ENCODE measurements at regions of chr6 and their contacts with region 1.

Region 1: DNA sequence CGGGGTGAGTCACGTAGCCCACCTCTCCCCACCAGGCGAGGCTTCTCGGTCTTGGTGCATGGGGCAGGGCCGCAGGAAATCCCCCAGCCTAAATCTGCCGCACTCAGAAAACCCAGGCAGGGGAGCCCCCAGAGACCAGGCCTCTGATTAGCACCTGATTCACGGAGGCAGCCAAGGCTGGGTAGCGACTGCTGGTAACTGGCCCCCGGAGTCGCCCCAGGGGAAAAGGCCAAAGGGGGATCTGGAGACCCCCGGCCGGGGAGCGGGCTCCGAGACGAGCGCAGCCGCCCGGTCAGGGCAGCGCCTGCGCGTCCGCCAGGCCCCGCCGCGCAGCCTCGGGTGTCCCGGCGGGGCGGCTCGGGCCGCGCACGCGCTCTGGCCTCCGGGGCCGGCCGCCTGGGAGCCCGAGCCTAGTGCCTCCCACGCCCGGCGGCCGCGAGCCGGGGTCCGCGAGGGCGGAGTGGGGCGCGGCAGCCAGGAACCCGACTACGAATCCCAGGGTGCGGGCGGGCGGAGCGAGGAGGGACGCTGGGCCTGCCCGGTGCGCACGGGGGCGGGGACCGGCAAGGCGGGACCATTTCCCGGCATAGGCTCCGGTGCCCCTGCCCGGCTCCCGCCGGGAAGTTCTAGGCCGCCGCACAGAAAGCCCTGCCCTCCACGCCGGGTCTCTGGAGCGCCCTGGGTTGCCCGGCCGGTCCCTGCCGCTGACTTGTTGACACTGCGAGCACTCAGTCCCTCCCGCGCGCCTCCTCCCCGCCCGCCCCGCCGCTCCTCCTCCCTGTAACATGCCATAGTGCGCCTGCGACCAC is at the start of gene DUSP22:
- DNase-seq: peak; percentile 93
- ATAC-seq: peak; percentile 70
- H3K4me3 Mint-ChIP-seq: peak within 1 kb of the TSS; percentile 81
- H3K27ac Mint-ChIP-seq: peak within 1 kb of the TSS; percentile 93
- H3K4me1 Mint-ChIP-seq: peaks cover 58% of the 10 kb centered on the region
- H3K27me3 Mint-ChIP-seq: no peaks in the 10 kb centered on the region
- total RNA-seq, gene DUSP22: 33.2 to 33.7 TPM

Region 2: GRCh38 chr6:188821-189655 is 102.9 kb before region 1 on chr6:
- CTCF ChIA-PET with region 1: no interaction called
- POLR2A ChIA-PET with region 1: interaction called, 4 read pairs
- intact Hi-C with region 1: loop called (anchors 1 kb)
- DNase-seq: peak; percentile 92
- ATAC-seq: peak; percentile 78
- H3K4me3 Mint-ChIP-seq: no peak overlapping the region
- H3K27ac Mint-ChIP-seq: peak overlapping the region; percentile 95
- H3K4me1 Mint-ChIP-seq: peaks cover 52% of the 10 kb centered on the region
- H3K27me3 Mint-ChIP-seq: peaks cover 3% of the 10 kb centered on the region

Region 3: GRCh38 chr6:235763-236360 is 56.0 kb before region 1 on chr6:
- CTCF ChIA-PET with region 1: interaction called, 4 read pairs
- POLR2A ChIA-PET with region 1: no interaction called
- intact Hi-C with region 1: loop called in 1 of 2 experiments (anchors 1 kb)
- DNase-seq: peak; percentile 87
- ATAC-seq: peak; percentile 90
- H3K4me3 Mint-ChIP-seq: peak overlapping the region; percentile 44
- H3K27ac Mint-ChIP-seq: peak overlapping the region; percentile 80
- H3K4me1 Mint-ChIP-seq: peaks cover 51% of the 10 kb centered on the region
- H3K27me3 Mint-ChIP-seq: no peaks in the 10 kb centered on the region

Region 4: DNA sequence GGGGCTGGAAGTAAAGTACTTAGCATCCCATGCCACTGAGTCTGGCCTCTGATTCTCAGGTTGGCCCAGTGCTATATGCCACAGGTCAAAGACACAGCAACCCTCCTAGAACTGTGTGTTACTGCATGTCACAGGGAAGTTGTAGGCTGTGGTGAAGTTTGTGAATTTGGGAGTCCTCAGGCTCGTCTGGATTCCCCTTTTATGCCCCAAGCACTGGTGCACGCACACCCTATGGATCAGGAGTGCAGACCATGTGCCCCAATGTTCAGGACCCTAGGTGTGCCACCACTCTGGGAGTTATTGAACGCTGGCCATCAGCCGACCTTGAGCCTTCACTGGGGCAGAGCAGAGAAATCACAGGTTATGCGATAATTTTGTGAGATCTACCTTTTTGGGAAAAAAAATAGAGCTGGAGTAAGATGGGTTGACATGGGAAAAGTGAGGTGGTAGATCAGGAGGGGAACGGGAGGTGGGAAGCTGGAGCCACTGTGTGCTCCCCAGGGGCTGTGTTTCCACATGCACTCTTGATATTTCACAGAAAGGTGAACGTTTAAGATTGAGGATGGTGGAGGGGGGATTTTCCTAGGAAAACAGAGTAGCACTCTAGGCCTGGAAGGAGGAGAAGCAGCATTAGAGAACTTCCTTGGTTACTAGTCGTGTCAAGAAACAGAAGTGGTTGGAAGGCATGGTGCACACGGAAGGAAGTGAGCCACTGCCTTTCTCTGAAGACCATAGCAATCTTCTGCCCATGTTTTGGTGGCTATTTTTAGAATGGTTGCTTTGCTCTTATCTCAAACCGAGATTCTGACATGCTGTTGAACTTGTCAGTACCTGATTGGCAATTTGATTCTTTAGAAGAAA is 44.5 kb after region 1 on chr6:
- CTCF ChIA-PET with region 1: interaction called, 6 read pairs
- POLR2A ChIA-PET with region 1: no interaction called
- intact Hi-C with region 1: loop called (anchors 1 to 5 kb)
- DNase-seq: no peak
- ATAC-seq: peak; percentile 30
- H3K4me3 Mint-ChIP-seq: no peak overlapping the region
- H3K27ac Mint-ChIP-seq: no peak overlapping the region
- H3K4me1 Mint-ChIP-seq: peaks cover 48% of the 10 kb centered on the region
- H3K27me3 Mint-ChIP-seq: no peaks in the 10 kb centered on the region

Region 5: GRCh38 chr6:373751-374724 is 82.1 kb after region 1 on chr6:
- CTCF ChIA-PET with region 1: no interaction called
- POLR2A ChIA-PET with region 1: no interaction called
- intact Hi-C with region 1: no loop called
- DNase-seq: no peak
- ATAC-seq: no peak
- H3K4me3 Mint-ChIP-seq: no peak overlapping the region
- H3K27ac Mint-ChIP-seq: no peak overlapping the region
- H3K4me1 Mint-ChIP-seq: peaks cover 7% of the 10 kb centered on the region
- H3K27me3 Mint-ChIP-seq: peaks cover 35% of the 10 kb centered on the region

Region 6: GRCh38 chr6:490251-491037 is 198.5 kb after region 1 on chr6:
- CTCF ChIA-PET with region 1: no interaction called
- POLR2A ChIA-PET with region 1: no interaction called
- intact Hi-C with region 1: loop called (anchors 2 to 5 kb)
- DNase-seq: peak; percentile 71
- ATAC-seq: peak; percentile 62
- H3K4me3 Mint-ChIP-seq: peak overlapping the region; percentile 58
- H3K27ac Mint-ChIP-seq: peak overlapping the region; percentile 97
- H3K4me1 Mint-ChIP-seq: peaks cover 95% of the 10 kb centered on the region
- H3K27me3 Mint-ChIP-seq: no peaks in the 10 kb centered on the region

Region 7: GRCh38 chr6:692855-693722 is 401.2 kb after region 1 on chr6 and contains the start of gene EXOC2:
- CTCF ChIA-PET with region 1: no interaction called
- POLR2A ChIA-PET with region 1: no interaction called
- intact Hi-C with region 1: loop called in 1 of 2 experiments (anchors 1 kb)
- DNase-seq: peak; percentile 91
- ATAC-seq: peak; percentile 84
- H3K4me3 Mint-ChIP-seq: peak within 1 kb of the TSS; percentile 91
- H3K27ac Mint-ChIP-seq: peak within 1 kb of the TSS; percentile 92
- H3K4me1 Mint-ChIP-seq: peaks cover 26% of the 10 kb centered on the region
- H3K27me3 Mint-ChIP-seq: no peaks in the 10 kb centered on the region
- total RNA-seq, gene EXOC2: 31.9 to 38.9 TPM

Measured in activated CD4-positive, alpha-beta T cell treated with anti-CD3 and anti-CD28 coated beads for 36 hours (primary cell).